Activated CD4-positive, alpha-beta T cell treated with anti-CD3 and anti-CD28 coated beads, Interleukin-2, amount 10 ng/mL, durations not matched to agents 24 days and 14 days (primary cell): ENCODE measurements at regions of chr4 and their contacts with region 1.

Region 1: DNA sequence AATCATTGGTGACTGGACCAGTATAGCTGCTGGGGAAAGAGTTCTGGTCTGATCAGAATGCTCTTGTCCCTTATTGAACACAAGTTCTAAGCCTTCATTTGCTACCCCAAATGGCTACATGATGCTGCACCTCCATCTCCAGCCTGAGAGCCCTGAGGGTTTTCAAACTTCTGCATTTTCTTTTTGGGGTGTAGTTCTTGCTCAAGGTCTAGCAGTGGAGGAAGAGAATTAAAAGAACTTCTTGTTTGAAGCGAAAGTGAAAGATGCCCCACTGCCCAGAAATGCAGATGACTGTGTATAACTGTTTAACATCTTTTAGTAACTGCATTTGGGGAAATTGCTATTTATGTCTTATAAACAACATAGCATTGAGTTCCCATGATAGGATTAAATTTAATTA is 38.5 kb downstream of the LAMTOR3 start:
- DNase-seq: peak; percentile 82
- H3K4me3 Mint-ChIP-seq: peak overlapping the region; percentile 68
- H3K27ac Mint-ChIP-seq: peak overlapping the region; percentile 88
- H3K4me1 Mint-ChIP-seq: peaks cover 67% of the 10 kb centered on the region
- H3K27me3 Mint-ChIP-seq: no peaks in the 10 kb centered on the region

Region 2: GRCh38 chr4:98995183-98996055 is 860.3 kb before region 1 on chr4 and contains the start of gene METAP1:
- intact Hi-C with region 1: no loop called
- DNase-seq: peak; percentile 98
- H3K4me3 Mint-ChIP-seq: peak within 1 kb of the TSS; percentile 89
- H3K27ac Mint-ChIP-seq: peak within 1 kb of the TSS; percentile 98
- H3K4me1 Mint-ChIP-seq: peaks cover 32% of the 10 kb centered on the region
- H3K27me3 Mint-ChIP-seq: peaks cover 3% of the 10 kb centered on the region
- total RNA-seq, gene METAP1: 61.2 and 63.3 TPM in 2 replicates

Region 3: DNA sequence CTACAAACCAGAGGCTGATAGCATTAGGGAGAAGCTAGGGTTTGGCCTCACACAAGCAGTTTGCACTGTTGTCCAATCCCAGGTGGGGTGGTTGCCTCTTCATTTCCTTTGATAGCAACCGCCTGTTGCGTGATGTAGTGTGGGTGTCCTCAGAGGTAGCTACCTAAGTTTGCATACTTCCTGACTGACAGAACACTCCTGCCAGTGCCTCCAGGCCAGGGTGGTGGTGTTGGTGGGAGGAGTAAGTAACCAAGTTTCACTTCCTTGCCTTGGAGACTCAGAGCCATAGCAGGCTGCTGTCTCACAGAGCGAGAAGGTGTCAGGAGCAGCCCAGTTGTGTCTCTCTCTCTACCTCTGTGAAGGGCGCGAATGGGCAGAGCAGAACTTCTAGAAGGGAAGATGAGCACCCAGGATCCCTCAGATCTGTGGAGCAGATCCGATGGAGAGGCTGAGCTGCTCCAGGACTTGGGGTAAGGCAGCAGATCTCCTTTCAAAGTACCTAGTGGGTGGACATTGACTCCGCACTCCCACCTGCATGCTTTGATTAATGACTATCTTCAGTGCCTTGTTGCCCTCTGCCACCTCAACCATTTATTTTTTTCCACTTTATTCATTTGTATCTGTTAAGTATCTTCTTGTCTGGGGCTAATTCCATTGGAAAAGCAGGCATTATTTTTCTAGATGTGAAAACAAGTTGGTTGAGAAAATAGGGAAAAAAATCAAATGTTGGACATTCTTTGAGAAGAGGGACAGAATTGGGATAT is 39.0 kb before region 1 on chr4 and contains the start of gene DAPP1:
- intact Hi-C with region 1: loop called (anchors 1 kb)
- DNase-seq: peak; percentile 95
- H3K4me3 Mint-ChIP-seq: peak within 1 kb of the TSS; percentile 95
- H3K27ac Mint-ChIP-seq: peak within 1 kb of the TSS; percentile 97
- H3K4me1 Mint-ChIP-seq: peaks cover 70% of the 10 kb centered on the region
- H3K27me3 Mint-ChIP-seq: no peaks in the 10 kb centered on the region
- total RNA-seq, gene DAPP1: 28.4 and 29.5 TPM in 2 replicates

Region 4: GRCh38 chr4:99868126-99868596 is 12.5 kb after region 1 on chr4:
- intact Hi-C with region 1: loop called (anchors 1 kb)
- DNase-seq: no peak
- H3K4me3 Mint-ChIP-seq: no peak overlapping the region
- H3K27ac Mint-ChIP-seq: peak overlapping the region; percentile 63
- H3K4me1 Mint-ChIP-seq: peaks cover 10% of the 10 kb centered on the region
- H3K27me3 Mint-ChIP-seq: no peaks in the 10 kb centered on the region

Region 5: DNA sequence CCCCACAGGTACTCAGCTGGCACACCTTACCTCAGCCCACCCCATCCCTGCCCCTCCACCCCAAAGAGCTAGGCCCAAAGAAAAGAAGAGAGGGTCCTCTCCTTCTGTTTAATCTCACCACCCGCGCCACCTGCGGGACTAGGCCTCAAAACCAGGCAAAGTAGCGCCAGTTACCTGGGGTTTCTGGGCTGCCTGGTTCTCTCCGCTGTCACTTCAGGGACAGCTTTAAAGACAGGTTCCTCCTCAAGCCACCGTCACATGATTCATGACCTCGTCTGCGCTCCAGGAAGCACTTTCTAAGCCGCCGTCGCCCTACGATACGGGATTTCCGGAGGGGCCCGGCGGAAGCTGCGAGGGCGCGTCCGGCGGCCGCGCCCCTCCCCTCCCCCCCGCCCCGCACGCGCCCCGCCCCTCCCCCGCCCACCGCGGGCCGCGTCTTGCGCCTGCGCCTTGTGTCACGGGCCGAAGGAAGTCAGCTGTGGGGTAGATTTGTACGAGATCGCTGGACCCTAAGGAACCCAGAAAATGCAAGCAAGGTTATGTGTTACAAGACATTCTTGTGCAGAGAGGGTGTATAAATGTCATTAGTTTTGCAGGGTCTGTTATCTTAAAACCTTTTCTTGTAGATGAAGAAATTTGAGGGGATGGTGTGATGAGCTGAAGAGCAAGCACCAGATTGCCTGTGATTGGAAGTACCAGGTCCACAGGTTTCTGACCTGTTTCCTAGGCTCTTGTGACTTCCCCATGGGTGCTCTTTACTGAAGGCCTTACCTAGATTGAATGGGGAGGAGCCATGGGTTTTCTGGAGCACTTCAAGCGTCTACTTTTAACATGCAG is 38.7 kb after region 1 on chr4 and contains the start of gene LAMTOR3:
- intact Hi-C with region 1: loop called (anchors 1 kb)
- DNase-seq: peak; percentile 96
- H3K4me3 Mint-ChIP-seq: peak within 1 kb of the TSS; percentile 94
- H3K27ac Mint-ChIP-seq: peak within 1 kb of the TSS; percentile 94
- H3K4me1 Mint-ChIP-seq: peaks cover 32% of the 10 kb centered on the region
- H3K27me3 Mint-ChIP-seq: no peaks in the 10 kb centered on the region
- total RNA-seq, gene LAMTOR3: 28.0 and 32.8 TPM in 2 replicates